ENCODE measurements at regions of chr11 and their contacts with region 1.

Region 1: DNA sequence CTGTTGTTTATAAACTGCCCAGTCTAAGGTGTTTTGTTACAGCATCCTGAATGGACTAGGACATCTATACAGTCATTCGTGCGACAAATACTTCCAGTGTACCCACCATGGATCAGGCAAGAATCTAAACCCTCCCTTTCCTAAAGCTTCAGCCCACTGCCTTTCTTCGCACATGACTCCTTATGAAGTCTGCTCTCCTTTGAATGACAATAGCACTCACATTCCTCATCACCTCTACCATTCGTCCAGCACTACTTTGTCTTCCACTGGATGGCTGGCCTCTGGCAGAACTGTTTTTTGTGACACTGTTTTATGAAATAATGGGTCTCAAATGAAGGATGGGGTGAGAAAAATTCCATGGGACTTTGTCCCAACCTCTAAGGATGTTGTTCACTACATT is 89.8 kb upstream of the LIN7C start:
- DNase-seq: no peak

Region 2: DNA sequence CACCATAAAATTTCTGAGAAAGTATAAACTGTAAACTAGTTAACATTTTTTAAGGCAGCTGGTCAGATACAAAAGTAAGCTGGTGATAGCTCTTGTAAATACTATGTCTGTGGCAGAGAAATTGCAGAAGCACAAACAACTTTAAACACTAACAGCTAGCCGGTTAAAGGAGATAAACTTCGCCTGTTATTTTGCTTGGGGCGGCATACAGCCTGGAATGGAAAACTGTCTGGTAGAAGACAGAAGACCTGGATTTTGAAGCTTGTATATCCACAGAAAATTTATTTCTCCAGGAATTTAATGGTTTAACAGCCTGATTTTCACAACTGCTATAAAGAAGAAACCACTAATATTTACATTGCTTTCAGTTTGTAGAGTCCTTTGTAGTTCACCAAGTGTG is 667.8 kb before region 1 on chr11:
- intact Hi-C with region 1: no loop called
- DNase-seq: no peak

Region 3: GRCh38 chr11:27451244-27451965 is 145.0 kb before region 1 on chr11:
- intact Hi-C with region 1: no loop called
- DNase-seq: no peak

Region 4: GRCh38 chr11:27551127-27551526 is 45.3 kb before region 1 on chr11:
- intact Hi-C with region 1: loop called in 1 of 2 experiments (anchors 2 kb)
- DNase-seq: no peak

Region 5: DNA sequence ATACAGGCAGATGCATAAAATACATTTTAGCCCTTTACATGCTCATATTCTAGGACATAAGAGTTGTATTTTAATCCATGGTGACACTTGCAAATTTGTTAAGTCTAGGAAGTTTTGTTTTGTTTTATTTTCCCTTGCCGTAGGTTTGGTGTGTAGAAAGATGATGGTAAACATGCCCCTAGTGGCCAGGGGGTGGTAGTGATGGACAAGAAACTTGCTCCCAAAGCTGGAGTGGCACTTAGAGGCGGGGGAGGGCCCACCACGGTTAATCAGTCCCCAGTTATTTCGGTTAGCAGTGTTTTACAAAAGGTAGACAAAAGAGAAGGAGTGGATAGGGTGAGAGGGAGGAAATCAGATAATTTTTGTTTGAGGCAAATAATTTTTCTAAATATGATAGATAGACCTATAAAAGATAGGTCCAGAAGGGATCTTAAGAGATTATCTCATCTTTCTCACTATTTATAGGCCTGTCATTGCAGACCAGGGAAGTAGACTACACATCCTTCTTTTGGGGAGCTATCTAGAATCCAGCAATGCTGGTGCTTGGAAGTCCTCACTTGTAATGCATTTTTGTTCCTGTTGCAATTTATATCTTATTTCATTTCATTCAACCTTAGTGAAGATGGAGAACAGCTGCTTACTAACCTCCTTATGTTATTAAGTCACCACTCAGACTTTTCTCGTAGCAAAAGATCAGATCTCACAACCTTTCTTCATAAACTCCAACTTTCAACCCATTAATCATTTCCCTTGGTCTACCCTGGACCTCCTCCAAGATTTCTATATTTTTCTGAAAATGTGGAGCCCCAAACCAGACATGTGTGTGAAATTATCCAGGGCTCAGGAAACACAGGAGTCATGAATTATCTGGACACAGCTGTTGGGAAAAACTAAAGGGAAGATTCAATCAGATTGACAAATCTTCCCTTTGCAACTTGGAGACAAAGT is 109.8 kb after region 1 on chr11:
- intact Hi-C with region 1: no loop called
- DNase-seq: no peak

Measured in posterior vena cava (tissue), 2 donors.